Dorsolateral prefrontal cortex (tissue), 120 donors: ENCODE measurements at regions of chr13 and their contacts with region 1.

Region 1: DNA sequence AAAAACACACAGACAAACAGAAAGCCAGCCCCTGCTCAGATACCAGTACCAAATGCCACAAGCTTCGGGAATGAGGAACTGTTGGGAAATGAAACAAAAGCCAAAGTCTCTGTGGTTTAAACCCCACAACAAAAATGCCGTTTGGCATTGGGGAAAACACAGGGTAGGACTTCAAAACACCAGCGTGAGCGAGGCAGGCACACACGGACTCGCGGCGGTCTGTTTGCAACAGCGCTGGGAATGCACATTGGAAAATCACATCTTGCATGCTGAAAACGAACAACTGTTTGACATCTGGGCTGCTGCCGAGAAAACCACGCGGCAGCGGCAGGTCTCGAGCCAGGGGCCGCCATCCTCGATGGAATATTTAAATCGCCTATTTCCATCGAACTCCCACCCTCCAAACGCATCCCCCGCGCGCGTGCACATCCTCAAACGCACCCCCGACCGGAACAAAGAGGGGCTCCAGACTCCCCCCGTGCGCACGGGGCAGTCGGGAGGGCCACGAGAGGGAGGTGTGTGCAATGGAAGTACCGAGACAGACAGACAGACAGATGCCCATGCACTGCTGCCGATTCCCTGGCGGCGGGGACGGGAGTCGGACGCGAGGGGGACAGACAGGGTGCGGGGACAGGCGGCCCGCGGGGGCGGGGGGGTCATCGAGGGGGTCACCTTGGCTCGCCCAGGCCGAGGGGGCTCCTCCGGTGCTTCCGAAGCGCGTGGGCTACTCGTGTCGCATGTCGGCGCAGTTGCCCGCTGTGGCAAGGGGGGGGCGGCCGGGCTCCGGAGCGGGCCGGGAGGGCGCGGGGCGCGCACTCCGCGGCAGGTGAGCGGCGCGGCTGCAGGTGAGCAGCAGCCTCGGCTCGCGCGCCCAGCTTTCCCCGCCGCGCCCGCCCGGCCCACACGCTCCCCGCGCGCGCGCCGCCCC is at the start of gene GPR12:
- DNase-seq: peak in 5 of 10 donors; percentile 15 to 47 (median 32)
- H3K4me3 ChIP-seq: peak within 1 kb of the TSS; percentile 41 to 83 (median 66)
- H3K27ac ChIP-seq: peak within 1 kb of the TSS in 52 of 59 donors; percentile 9 to 85 (median 64)
- H3K27me3 ChIP-seq: peaks cover 0 to 15% (median 0%) of the 10 kb centered on the region in 45 donors
- CTCF ChIP-seq: no peak
- total RNA-seq, gene GPR12: 6.1 to 27.7 (median 17.8) TPM

Region 2: DNA sequence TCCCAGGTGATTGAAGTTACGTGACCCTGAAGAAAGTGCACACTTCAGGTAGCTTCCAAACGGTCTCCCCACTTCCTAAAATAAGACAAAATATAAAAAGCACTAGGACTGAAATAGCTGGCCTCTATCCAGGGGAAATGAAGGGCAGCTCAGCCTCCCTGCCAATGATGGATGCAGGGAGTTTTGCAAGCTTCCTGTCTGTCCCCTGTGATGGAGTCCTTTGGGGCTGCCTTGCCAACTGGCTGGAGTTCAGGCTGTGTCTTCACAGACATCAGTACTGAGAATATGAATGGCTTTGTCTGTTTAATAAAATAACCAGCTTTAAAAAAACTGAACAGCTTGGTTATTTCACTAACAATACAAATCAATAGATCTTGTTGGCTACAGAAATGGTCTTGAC is 101.8 kb after region 1 on chr13:
- intact Hi-C with region 1: loop called in 1 of 2 experiments (anchors 5 kb)
- DNase-seq: no peak
- H3K4me3 ChIP-seq: no peak overlapping the region
- H3K27ac ChIP-seq: no peak overlapping the region
- H3K27me3 ChIP-seq: peaks cover 0 to 11% (median 0%) of the 10 kb centered on the region in 45 donors
- CTCF ChIP-seq: no peak